A549 (cell line): ENCODE measurements at regions of chr11 and their contacts with region 1.

Region 1: DNA sequence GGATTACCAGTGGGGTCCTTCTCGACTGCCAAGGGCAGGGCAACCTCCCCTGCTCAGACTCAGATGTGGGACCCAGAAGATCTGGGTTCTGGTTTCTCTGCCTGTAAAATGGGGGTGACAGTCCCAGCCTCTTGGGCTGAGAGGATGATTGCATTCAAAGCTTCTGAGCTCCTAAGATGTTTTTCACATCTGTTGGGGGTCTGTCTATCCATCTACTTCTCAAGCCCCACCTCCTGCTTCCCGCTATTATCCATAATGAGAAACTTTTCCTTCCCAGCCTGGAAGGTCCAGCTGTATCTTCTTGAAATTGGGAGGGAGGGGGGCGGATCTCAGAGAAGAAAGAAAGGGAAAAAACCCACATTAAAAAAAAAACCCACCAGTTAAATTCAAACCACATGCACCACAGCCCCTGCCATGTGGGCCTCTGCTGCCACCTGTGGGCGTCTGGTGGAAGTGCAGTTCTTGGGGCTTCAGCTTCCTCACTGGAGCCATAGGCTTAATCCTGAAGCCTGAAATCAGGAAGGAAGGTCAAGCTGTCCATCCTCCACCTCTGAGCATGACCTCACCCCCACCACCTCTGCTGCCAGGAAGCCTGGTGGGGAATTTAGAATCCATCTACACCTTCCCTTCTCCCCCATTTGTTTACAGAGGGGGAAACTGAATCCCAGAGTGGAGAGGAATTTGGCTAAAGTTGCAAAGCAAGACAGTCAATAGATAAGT is 27.3 kb downstream of the ARHGEF17 start:
- DNase-seq: peak; percentile 73 to 93
- ATAC-seq: peak; percentile 72 to 83
- H3K4me3 ChIP-seq: no peak overlapping the region
- H3K27ac ChIP-seq: peak overlapping the region; percentile 62 to 80
- H3K4me1 ChIP-seq: peaks cover 38% of the 10 kb centered on the region
- CTCF ChIP-seq: peak; percentile 97
- EP300 ChIP-seq: no peak
- POLR2A ChIP-seq: no peak
- RAD21 ChIP-seq: peak; percentile 93 to 95

Region 2: GRCh38 chr11:72864702-72865655 is 470.4 kb before region 1 on chr11:
- CTCF ChIA-PET with region 1: no interaction called
- POLR2A ChIA-PET with region 1: no interaction called
- DNase-seq: no peak
- ATAC-seq: no peak
- H3K4me3 ChIP-seq: no peak overlapping the region
- H3K27ac ChIP-seq: no peak overlapping the region
- H3K4me1 ChIP-seq: 0 out of 3 replicates have a peak, but pooled peaks cover 3% of the 10 kb centered on the region
- CTCF ChIP-seq: no peak
- EP300 ChIP-seq: no peak
- POLR2A ChIP-seq: no peak
- RAD21 ChIP-seq: no peak

Region 3: DNA sequence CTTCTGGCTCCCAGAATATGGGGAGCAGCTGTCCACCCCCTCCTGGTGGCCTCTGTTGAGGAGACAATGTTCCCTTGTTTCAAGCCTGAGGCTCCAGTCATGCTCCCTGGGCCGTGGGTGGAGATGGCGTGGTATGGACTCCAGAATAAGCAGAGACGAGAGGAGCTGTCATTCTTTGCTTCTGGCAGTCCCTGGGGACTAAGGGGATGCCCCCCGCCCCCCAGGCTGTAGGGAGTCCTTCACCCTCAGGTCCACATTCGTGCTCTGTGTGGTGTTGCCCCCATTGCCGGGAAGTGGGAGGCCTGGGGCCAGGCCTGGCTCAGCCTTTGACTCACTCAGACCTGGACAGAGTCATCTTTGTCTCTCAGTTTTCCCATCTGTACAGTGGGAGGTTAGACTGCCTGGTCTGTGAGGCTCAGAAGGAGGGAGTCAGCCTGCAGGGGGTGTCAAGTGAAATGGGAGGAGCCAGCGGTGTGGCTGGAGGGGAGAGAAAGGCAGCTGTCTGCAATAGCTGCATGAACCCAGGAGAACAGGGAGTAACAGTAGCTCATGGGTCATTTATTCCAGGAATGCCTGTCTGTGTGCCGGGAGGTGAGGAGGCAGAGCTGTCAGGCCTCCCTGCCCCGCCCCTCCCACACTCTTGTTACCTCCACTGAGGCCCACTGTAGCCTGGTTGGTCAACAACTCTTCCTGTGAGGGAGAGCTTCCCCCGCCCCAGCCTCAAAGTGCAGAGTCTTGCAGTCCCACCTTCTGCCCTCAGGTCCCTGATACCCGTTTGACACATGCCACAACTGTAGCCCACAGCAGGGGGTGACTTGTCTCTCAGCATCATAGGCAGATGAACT is 21.0 kb before region 1 on chr11:
- CTCF ChIA-PET with region 1: interaction called, 527 read pairs
- POLR2A ChIA-PET with region 1: interaction called, 39 read pairs
- DNase-seq: peak in 1 of 2 experiments; percentile 30
- ATAC-seq: peak in 1 of 2 experiments; percentile 29; a peak in 3 of 6 replicates
- H3K4me3 ChIP-seq: no peak overlapping the region
- H3K27ac ChIP-seq: peak overlapping the region in 1 of 2 experiments; percentile 21; a peak in 1 of 6 replicates
- H3K4me1 ChIP-seq: peaks cover 32% of the 10 kb centered on the region
- CTCF ChIP-seq: no peak
- EP300 ChIP-seq: no peak
- POLR2A ChIP-seq: no peak
- RAD21 ChIP-seq: no peak

Region 4: GRCh38 chr11:73680687-73681086 is 345.3 kb after region 1 on chr11:
- CTCF ChIA-PET with region 1: no interaction called
- POLR2A ChIA-PET with region 1: no interaction called
- DNase-seq: no peak
- ATAC-seq: no peak; a peak in 1 of 6 replicates
- H3K4me3 ChIP-seq: no peak overlapping the region
- H3K27ac ChIP-seq: no peak overlapping the region
- H3K4me1 ChIP-seq: no peaks in the 10 kb centered on the region
- CTCF ChIP-seq: no peak
- EP300 ChIP-seq: no peak
- POLR2A ChIP-seq: no peak
- RAD21 ChIP-seq: no peak